ENCODE measurements at regions of chr4 and their contacts with region 1.

Region 1: DNA sequence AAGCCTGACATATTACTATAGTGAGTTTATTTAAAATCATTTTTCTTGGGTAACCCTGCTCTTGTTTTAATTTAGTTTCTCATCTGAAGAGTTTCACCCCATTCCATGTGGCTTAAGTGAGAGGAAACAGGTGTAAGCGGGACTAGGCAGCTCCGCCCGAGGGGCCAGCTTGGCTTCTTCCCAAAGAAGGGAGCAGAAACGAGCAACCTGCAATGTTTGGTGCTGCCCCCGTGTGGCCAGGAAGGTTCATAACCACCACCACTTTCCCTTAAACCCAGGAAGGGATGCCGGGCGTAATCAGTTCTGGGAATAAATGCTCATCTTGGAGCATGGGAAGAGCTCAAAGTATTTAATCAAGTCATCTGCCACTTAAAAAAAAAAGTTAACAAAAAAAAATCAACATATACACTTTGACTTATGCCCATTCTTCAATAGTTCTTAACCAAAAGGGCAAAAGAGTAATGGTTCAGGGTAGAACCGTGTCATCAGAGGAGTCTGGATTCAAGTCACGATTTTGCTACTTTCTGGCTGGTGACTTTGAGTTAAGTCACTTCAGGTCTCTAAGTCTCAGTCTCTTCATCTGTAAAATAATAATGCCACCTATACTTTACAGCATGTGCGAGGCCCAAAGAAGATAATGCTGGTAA is 147.9 kb downstream of the NSUN7 start:
- DNase-seq: peak; percentile 71
- H3K4me3 ChIP-seq: no peak overlapping the region
- H3K27ac ChIP-seq: no peak overlapping the region
- H3K4me1 ChIP-seq: peaks cover 0 to 6% (median 0%) of the 10 kb centered on the region in 4 donors
- H3K27me3 ChIP-seq: no peaks in the 10 kb centered on the region
- CTCF ChIP-seq: peak; percentile 64 to 83 (median 80)
- EP300 ChIP-seq: no peak
- POLR2A ChIP-seq: no peak

Region 2: DNA sequence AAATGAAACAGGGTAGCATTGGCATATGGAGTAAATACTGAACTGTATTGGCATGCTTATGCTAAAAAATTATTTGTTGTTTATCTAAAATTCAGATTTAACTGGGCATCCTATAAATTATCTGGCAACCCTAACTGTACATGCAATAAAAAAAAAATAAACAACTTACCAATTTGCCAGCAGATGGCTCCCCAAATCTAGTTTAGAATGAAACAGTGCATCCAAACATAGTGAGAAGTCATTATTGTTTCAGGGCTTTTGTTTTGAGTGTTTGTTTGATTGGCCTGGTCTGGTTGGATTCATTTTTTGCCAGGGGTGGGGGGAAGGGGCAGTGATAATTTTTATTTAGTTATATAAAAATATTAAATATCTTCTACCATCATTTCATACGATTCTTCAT is 160.8 kb before region 1 on chr4:
- in situ Hi-C with region 1: loop called in 3 of 4 experiments (anchors 10 to 25 kb)
- intact Hi-C with region 1: no loop called
- DNase-seq: no peak
- H3K4me3 ChIP-seq: no peak overlapping the region
- H3K27ac ChIP-seq: no peak overlapping the region
- H3K4me1 ChIP-seq: peaks cover 0 to 3% (median under 1%) of the 10 kb centered on the region in 4 donors
- H3K27me3 ChIP-seq: no peaks in the 10 kb centered on the region
- CTCF ChIP-seq: peak in 4 of 5 experiments; percentile 22 to 35 (median 28)
- EP300 ChIP-seq: no peak
- POLR2A ChIP-seq: no peak

Region 3: DNA sequence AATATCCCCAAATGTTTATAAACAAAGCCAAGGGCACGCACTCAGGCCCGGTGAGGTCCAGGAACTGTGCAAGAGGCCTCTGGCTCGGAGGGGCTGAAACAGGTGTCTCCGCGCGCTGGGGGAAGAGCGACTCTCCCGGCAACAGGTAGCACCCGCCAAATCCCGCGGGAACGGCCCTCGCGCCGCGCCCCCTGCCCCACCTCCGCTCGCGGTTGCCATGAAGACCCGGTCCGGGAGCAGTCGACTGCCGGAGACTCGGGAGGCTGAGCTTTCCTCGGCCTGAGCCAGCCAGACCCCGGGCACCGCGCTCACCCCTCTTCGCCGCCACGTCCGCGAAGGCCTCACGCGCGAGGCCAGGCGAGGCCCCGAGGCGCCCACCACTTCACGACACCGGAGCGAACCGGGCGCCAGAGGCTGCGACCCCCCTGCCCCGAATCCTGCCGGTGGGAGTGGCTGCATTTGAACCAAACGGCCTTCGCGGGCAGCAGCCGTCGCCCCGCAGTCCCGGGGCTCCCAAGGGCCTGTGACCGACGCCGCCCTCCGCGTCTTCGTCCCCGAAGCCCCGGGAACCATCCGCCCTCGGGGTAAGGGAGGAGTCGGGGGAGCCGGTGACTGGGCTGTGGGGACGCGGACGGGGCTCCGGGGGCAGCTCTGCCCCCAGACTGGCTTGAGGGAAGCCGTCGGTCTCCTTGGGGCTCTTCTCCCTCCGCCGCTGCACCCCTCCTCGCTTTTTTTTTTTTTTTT is 147.8 kb before region 1 on chr4 and contains the start of gene NSUN7:
- in situ Hi-C with region 1: loop called in 2 of 4 experiments (anchors 10 to 25 kb)
- intact Hi-C with region 1: no loop called
- DNase-seq: peak; percentile 88
- H3K4me3 ChIP-seq: peak within 1 kb of the TSS; percentile 46 to 66 (median 61)
- H3K27ac ChIP-seq: peak within 1 kb of the TSS; percentile 67 to 81 (median 78)
- H3K4me1 ChIP-seq: peaks cover 0 to 5% (median 1%) of the 10 kb centered on the region in 4 donors
- H3K27me3 ChIP-seq: no peaks in the 10 kb centered on the region
- CTCF ChIP-seq: no peak
- EP300 ChIP-seq: no peak
- POLR2A ChIP-seq: peak; percentile 63
- total RNA-seq, gene NSUN7: 8.1 to 37.0 (median 17.3) TPM

Region 4: DNA sequence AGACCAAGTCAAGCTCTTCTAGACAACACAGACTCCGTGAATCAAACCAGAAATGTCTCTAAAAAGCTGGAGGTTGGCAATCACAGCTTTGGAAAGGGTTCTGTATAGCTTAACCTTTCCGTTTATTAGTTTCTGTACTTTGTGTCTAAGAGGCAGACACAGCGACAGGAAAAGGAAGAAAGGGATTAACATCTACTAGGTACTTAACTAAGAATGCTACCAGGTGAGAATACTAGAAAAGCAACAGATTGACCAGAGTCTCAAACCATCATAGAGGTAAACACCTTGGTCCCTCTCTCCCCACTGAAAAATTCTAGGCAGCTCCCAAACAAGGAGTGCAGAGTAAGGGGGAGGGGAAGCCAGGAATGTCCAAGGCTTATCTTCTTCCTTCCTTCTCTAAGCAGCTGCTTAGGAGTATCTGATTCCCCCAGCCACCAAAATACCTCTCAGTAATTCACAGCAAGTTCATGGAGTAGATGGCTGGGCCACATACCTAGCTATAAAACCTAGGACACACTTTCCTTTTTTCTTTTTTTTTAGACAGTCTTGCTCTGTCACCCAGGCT is 235.9 kb after region 1 on chr4:
- in situ Hi-C with region 1: no loop called
- intact Hi-C with region 1: no loop called
- DNase-seq: no peak
- H3K4me3 ChIP-seq: no peak overlapping the region
- H3K27ac ChIP-seq: peak overlapping the region in 3 of 4 donors; percentile 37 to 63 (median 62)
- H3K4me1 ChIP-seq: peaks cover 8 to 53% (median 29%) of the 10 kb centered on the region in 4 donors
- H3K27me3 ChIP-seq: no peaks in the 10 kb centered on the region
- CTCF ChIP-seq: no peak
- EP300 ChIP-seq: no peak
- POLR2A ChIP-seq: no peak